ENCODE measurements at regions of chr22 and their contacts with region 1.

Region 1: DNA sequence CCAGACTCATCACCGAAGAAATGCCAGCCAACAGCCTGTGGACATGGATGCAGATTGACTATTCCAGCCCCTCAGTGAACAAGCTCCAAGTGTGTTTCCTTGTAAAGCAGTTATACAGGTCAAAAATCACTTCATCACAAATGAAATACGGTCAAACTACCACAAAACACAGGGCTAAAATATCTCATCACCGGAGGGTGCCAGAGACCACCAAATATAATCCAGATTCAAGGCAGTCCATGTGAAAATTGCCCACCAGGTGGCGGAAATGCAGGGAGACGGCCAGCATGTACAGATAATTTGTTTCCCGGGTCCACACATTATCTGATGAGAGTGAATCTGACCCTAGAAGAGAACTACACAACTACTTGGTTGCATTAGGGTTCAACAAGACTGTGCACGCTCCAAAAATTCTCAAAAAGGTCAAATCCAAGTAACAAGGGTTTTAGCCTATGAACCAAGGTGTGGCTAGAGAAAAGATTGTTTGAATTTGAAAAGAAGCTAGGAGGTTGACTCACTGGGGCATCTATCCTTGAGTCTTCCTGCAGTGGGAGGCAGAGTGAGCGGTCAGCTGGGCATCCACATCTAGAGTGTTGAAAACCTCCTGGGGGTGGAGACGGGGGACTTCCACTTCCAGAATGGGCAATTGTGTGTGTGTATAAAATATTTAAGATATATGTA is 71.7 kb downstream of the IGLL5 start:
- DNase-seq: peak; percentile 90
- H3K4me3 Mint-ChIP-seq: no peak overlapping the region
- H3K27ac Mint-ChIP-seq: no peak overlapping the region
- H3K4me1 Mint-ChIP-seq: no peaks in the 10 kb centered on the region
- H3K27me3 Mint-ChIP-seq: peaks cover 43% of the 10 kb centered on the region

Region 2: DNA sequence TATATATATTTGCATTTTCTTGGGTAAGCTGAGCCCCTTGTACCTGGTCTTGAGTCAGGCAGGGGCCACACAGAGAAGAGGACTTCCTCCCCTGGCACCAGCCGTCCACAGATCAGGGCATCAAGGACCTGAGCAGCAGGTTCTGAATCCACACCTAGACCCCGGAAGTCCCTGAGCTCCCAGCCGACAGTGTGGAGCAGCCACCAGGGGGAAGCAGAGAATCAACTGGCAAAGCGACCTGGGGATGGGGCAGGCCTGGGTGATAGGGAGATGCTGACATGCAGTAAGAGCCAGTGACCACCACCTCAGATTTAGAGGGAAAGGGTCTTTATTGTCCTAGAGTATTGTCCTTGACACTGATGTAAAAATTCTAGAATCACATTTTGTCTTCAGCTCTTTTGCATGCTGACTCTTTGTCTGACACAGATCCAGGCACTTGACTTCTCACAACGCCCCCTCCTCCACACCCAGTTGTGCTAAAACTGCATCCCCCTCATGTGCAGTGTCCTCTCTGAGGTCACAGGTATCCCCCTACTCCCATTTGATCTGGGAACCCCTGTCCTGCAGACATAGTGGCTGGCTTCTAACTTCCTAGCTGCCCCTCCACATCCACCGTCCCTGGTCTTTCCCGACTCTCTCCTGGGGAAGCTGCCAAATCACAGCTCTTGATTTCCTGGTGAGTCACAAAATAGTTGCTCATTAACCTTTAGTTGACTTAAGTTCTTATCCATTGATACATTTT is 205.6 kb before region 1 on chr22:
- intact Hi-C with region 1: loop called (anchors 2 kb)
- DNase-seq: peak; percentile 92
- H3K4me3 Mint-ChIP-seq: no peak overlapping the region
- H3K27ac Mint-ChIP-seq: no peak overlapping the region
- H3K4me1 Mint-ChIP-seq: peaks cover 4% of the 10 kb centered on the region
- H3K27me3 Mint-ChIP-seq: no peaks in the 10 kb centered on the region

Region 3: DNA sequence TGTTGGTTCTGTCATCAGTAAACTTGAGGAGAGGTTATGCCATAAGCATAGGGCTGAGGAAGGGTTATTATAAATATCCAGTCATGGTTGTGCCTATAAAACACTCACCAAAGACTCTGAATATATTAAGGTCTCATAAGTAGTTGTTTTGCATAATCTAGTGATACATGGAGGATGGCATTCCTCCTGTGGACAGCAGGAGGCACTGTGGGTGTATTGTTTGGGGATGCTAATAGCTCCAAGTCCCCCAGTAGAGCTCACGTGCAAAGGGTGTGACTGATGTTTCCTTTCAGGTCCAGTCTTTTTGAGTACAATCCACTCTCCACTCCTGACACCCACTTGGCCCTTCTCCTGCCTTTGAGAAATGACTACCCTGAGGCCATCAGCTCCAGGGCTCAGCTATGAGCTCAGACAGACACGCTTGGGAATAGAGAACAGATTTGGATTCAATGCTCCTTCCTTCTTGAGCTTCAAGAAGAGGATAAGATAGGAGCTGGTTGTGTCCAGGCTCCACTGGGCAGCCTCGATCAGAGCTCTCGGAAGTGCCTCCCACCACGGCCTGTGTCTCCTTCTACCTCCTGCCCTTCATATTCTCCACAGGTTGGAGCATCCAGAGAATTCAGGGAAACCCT is 156.8 kb before region 1 on chr22:
- intact Hi-C with region 1: loop called (anchors 5 kb)
- DNase-seq: peak; percentile 85
- H3K4me3 Mint-ChIP-seq: no peak overlapping the region
- H3K27ac Mint-ChIP-seq: no peak overlapping the region
- H3K4me1 Mint-ChIP-seq: peaks cover 2% of the 10 kb centered on the region
- H3K27me3 Mint-ChIP-seq: peaks cover 28% of the 10 kb centered on the region

Region 4: DNA sequence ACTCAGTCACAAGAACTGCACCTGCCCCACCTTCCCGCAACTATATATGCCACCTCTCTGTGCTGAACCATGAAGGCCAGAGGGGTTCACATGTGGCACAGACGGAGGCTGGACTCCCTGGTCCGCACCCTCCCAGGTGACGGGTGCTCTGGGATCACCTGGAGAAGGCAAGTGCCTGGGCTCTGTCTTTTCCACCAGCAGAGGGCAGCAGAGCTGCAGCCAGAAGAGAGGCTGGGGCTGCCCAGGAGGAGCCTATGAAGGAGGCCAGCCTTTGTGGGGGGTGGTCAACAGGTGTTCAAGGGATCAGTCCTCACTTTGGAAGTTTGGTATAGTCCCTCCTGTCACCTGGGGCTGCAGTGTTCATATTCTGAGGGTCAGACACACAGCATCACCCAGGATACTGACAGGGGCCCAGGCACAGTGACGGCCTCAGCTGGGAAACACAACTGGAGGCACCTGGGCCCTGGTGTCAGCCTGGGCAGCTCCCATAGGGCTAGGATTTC is 110.9 kb before region 1 on chr22:
- intact Hi-C with region 1: loop called (anchors 2 kb)
- DNase-seq: peak; percentile 92
- H3K4me3 Mint-ChIP-seq: no peak overlapping the region
- H3K27ac Mint-ChIP-seq: no peak overlapping the region
- H3K4me1 Mint-ChIP-seq: peaks cover 7% of the 10 kb centered on the region
- H3K27me3 Mint-ChIP-seq: peaks cover 51% of the 10 kb centered on the region

Region 5: DNA sequence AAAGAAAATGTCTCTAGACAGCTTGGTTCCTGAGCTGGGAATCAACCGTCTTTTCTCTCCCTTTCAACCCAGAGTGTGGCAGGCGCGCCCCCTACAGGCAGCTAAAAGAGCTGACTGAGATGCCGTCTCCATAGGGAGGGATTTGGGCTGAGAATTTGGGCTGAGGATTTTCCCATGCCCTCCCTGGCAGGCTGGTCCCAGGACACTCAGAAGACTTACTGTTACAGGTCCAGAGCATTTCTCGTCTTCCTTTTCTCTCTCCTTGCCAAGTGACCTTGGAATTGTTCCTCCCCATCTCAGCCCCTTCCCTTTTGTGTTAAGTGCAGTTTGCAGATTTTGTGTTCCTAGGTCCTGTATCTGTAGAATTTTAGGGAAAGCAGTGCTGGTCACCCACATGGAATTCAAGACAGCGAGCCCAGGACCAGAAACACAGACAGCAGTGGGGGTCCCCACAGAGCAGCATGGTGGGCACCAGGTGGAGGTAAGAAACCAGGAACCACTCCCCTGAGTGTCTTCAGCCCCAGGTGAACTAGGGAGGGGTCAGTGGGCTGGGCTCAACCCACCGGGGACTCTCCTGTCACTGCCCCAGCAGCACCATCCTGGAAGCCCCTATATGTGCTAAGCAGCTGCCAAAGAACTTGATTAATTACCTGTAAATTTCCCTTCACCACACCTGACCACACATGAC is 81.6 kb before region 1 on chr22:
- intact Hi-C with region 1: loop called (anchors 2 kb)
- DNase-seq: peak; percentile 92
- H3K4me3 Mint-ChIP-seq: no peak overlapping the region
- H3K27ac Mint-ChIP-seq: peak overlapping the region; percentile 20
- H3K4me1 Mint-ChIP-seq: no peaks in the 10 kb centered on the region
- H3K27me3 Mint-ChIP-seq: peaks cover 25% of the 10 kb centered on the region

Region 6: GRCh38 chr22:23012081-23012622 is 52.9 kb after region 1 on chr22:
- intact Hi-C with region 1: no loop called
- DNase-seq: peak; percentile 77
- H3K4me3 Mint-ChIP-seq: peak overlapping the region; percentile 39
- H3K27ac Mint-ChIP-seq: peak overlapping the region; percentile 57
- H3K4me1 Mint-ChIP-seq: peaks cover 20% of the 10 kb centered on the region
- H3K27me3 Mint-ChIP-seq: peaks cover 43% of the 10 kb centered on the region

Region 7: DNA sequence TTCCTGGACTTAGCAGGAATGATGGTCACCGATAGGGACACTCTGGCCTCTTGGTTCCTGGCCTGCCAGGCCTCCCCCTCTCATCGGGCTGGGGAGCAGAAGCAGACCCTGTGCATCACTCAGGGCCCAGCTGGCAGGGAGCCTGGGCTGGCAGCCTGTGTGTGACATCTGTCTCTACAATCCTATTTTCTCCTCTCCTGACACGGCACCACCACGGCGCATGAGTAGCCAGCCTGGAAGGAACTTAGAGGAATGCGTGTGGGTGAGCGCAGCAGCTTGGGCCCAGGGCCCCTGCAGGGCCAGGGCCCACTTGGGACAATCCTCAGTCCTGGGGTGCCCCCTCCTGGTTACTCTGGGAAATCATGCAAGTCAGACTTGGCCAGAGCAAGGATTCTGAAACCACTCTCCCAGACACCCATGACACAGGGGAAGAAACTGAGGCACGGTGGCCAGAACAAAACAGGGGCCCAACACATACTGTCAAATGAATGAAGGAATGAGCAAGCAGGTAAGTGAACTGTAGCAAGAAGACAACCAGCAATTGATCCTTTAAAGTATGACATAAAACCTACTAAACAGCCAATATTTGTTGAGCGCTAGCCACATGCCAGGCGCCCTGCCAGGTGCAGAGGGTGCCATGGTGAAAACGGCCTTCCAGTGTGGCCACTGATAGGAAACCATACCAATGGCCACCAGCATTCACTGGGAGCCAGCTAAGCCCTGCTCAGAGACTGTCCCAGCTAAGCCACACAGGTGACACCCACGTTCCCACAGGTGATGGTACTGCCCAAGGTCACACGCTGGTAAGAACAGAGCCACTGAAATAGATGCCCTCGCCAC is 169.2 kb after region 1 on chr22:
- intact Hi-C with region 1: loop called (anchors 1 kb)
- DNase-seq: peak; percentile 91
- H3K4me3 Mint-ChIP-seq: no peak overlapping the region
- H3K27ac Mint-ChIP-seq: no peak overlapping the region
- H3K4me1 Mint-ChIP-seq: peaks cover 3% of the 10 kb centered on the region
- H3K27me3 Mint-ChIP-seq: peaks cover 6% of the 10 kb centered on the region

Measured in activated CD4-positive, alpha-beta T cell treated with anti-CD3 and anti-CD28 coated beads, Interleukin-2, amount 10 ng/mL, durations not matched to agents 24 days and 14 days (primary cell).